ENCODE measurements at regions of chr13 and their contacts with region 1.

Region 1: DNA sequence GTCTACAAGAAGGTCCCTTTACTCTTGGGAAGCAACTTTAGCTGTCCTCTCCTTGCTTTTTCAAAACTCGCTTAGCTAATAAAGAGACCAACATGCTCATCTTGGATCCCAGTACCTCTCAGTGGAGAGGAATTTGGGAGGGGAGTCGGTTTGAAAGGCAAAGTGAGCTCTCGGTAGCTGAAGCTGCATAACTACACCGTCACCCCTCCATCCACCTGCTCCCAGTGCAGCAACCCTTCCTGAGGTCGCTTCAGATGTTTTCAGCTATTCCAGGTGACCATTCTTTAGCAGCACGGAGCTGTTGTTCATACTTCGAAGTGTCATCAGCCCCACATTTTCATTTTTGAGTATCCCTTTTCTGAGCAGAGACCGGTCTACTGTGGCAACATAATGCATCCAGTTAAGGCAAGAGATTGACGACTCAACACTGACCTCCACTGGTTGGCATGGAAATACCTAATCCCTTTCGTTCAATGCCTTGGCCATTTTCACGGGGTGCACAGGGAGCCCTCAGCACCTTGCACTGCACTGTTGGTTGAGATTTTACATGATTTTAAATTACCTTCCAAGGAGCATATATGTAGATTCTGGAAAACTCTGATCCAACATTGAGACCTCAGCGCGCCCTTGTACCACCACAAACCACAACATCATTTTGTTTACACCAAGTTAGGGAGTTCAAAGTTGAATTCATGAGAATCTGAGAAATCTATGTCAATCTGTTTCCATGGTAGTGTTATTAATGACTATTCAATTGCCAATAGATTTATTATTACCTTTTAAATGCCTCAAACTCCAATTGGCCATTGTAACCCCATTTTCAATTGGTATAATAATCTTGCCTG is 42.2 kb downstream of the DLEU7 start:
- DNase-seq: peak; percentile 69
- ATAC-seq: peak; percentile 99
- H3K4me3 ChIP-seq: no peak overlapping the region; the same call in 1 of the 2 replicates
- H3K27ac ChIP-seq: no peak overlapping the region
- H3K4me1 ChIP-seq: peaks cover 11% of the 10 kb centered on the region
- H3K27me3 ChIP-seq: no peaks in the 10 kb centered on the region
- CTCF ChIP-seq: peak; percentile 76 to 86 (median 85)
- EP300 ChIP-seq: no peak
- POLR2A ChIP-seq: no peak
- RAD21 ChIP-seq: peak; percentile 95

Region 2: GRCh38 chr13:49976314-49977258 is 824.7 kb before region 1 on chr13:
- CTCF ChIA-PET with region 1: interaction called, 51 read pairs
- POLR2A ChIA-PET with region 1: interaction called, 3 read pairs
- RAD21 ChIA-PET with region 1: interaction called, 30 read pairs
- SMC1A ChIA-PET with region 1: interaction called, 44 read pairs
- in situ Hi-C with region 1: loop called (anchors 5 kb)
- intact Hi-C with region 1: loop called (anchors 1 kb)
- DNase-seq: peak; percentile 55
- ATAC-seq: peak; percentile 95
- H3K4me3 ChIP-seq: no peak overlapping the region
- H3K27ac ChIP-seq: no peak overlapping the region
- H3K4me1 ChIP-seq: no peaks in the 10 kb centered on the region
- H3K27me3 ChIP-seq: no peaks in the 10 kb centered on the region
- CTCF ChIP-seq: peak; percentile 86 to 95 (median 88)
- EP300 ChIP-seq: no peak
- POLR2A ChIP-seq: no peak
- RAD21 ChIP-seq: peak; percentile 99

Region 3: DNA sequence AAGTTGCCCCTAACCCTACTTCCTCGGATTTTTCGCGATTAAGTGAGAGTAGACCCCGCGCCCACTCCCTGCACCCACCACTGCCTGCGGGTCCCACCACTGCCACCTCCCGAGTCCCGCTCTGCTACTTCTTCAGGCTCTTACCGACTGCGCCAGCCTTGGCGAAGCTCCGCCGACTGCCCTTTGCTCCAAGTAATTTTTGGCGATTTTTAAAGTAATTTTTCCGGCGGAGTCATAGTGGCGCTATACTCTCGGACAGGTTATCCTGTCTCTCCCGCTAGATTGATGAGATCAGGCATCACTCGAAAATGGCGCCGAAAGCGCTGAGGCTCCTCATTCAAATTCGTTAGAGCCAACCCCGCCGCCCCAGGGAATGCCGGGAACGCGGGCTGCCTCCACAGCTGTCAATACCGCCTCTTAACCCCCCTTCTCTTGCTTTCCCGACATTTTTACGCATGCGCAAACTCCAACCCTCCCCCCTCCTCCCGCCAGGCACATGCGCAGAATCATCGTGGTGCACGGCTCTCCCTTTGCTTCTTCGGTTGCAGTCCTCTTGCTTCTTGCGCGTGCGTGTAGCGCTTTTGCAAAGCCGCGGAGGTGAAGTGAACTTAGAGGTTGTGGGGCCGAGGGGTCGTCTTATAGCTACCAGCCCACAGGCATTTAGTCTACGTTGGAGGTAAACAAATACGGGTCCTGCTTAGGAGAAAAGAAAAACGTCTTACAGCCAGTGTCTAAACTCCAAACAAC is 719.5 kb before region 1 on chr13:
- CTCF ChIA-PET with region 1: interaction called, 36 read pairs
- POLR2A ChIA-PET with region 1: no interaction called
- RAD21 ChIA-PET with region 1: interaction called, 29 read pairs
- SMC1A ChIA-PET with region 1: interaction called, 18 read pairs
- in situ Hi-C with region 1: loop called (anchors 10 kb)
- intact Hi-C with region 1: loop called (anchors 2 kb)
- DNase-seq: peak; percentile 100
- ATAC-seq: peak; percentile 79
- H3K4me3 ChIP-seq: peak overlapping the region; percentile 92
- H3K27ac ChIP-seq: peak overlapping the region; percentile 82
- H3K4me1 ChIP-seq: peaks cover 4% of the 10 kb centered on the region; the same call in 1 of the 2 replicates
- H3K27me3 ChIP-seq: no peaks in the 10 kb centered on the region
- CTCF ChIP-seq: 0 out of 6 replicates have a peak, but pooled peaks of 2 of the 3 experiments have one; percentile 0 to 9
- EP300 ChIP-seq: 0 out of 4 replicates have a peak, but pooled peaks of 1 of the 2 experiments have one; percentile 9
- POLR2A ChIP-seq: peak; percentile 69
- RAD21 ChIP-seq: no peak

Region 4: GRCh38 chr13:50476577-50477285 is 324.6 kb before region 1 on chr13:
- CTCF ChIA-PET with region 1: interaction called, 18 read pairs
- POLR2A ChIA-PET with region 1: no interaction called
- RAD21 ChIA-PET with region 1: interaction called, 12 read pairs
- SMC1A ChIA-PET with region 1: interaction called, 9 read pairs
- in situ Hi-C with region 1: no loop called
- intact Hi-C with region 1: no loop called
- DNase-seq: no peak
- ATAC-seq: no peak
- H3K4me3 ChIP-seq: no peak overlapping the region
- H3K27ac ChIP-seq: no peak overlapping the region
- H3K4me1 ChIP-seq: no peaks in the 10 kb centered on the region
- H3K27me3 ChIP-seq: no peaks in the 10 kb centered on the region; a peak in 1 of 4 replicates
- CTCF ChIP-seq: no peak
- EP300 ChIP-seq: no peak
- POLR2A ChIP-seq: no peak
- RAD21 ChIP-seq: no peak

Region 5: GRCh38 chr13:50572129-50572528 is 229.2 kb before region 1 on chr13:
- CTCF ChIA-PET with region 1: no interaction called
- POLR2A ChIA-PET with region 1: no interaction called
- RAD21 ChIA-PET with region 1: no interaction called
- SMC1A ChIA-PET with region 1: no interaction called
- in situ Hi-C with region 1: no loop called
- intact Hi-C with region 1: no loop called
- DNase-seq: no peak
- ATAC-seq: no peak
- H3K4me3 ChIP-seq: no peak overlapping the region
- H3K27ac ChIP-seq: no peak overlapping the region
- H3K4me1 ChIP-seq: no peaks in the 10 kb centered on the region
- H3K27me3 ChIP-seq: peaks cover 0 to 3% of the 10 kb centered on the region in 2 experiments; a peak in 1 of 4 replicates
- CTCF ChIP-seq: no peak
- EP300 ChIP-seq: no peak
- POLR2A ChIP-seq: no peak
- RAD21 ChIP-seq: no peak

Region 6: GRCh38 chr13:50594276-50595051 is 206.8 kb before region 1 on chr13:
- CTCF ChIA-PET with region 1: interaction called, 19 read pairs
- POLR2A ChIA-PET with region 1: no interaction called
- RAD21 ChIA-PET with region 1: interaction called, 6 read pairs
- SMC1A ChIA-PET with region 1: interaction called, 12 read pairs
- in situ Hi-C with region 1: no loop called
- intact Hi-C with region 1: loop called (anchors 5 kb)
- DNase-seq: peak; percentile 79
- ATAC-seq: peak; percentile 91
- H3K4me3 ChIP-seq: peak overlapping the region; percentile 53; the same call in 1 of the 2 replicates
- H3K27ac ChIP-seq: peak overlapping the region; percentile 62
- H3K4me1 ChIP-seq: peaks cover 45% of the 10 kb centered on the region
- H3K27me3 ChIP-seq: no peaks in the 10 kb centered on the region
- CTCF ChIP-seq: 0 out of 6 replicates have a peak, but pooled peaks of 1 of the 3 experiments have one; percentile 17
- EP300 ChIP-seq: peak; percentile 71 to 80
- POLR2A ChIP-seq: no peak
- RAD21 ChIP-seq: peak; percentile 47

Region 7: GRCh38 chr13:50783717-50784290 is 17.5 kb before region 1 on chr13:
- CTCF ChIA-PET with region 1: interaction called, 5 read pairs
- POLR2A ChIA-PET with region 1: interaction called, 4 read pairs
- RAD21 ChIA-PET with region 1: interaction called, 4 read pairs
- SMC1A ChIA-PET with region 1: interaction called, 13 read pairs
- in situ Hi-C with region 1: no loop called
- intact Hi-C with region 1: no loop called
- DNase-seq: no peak
- ATAC-seq: no peak
- H3K4me3 ChIP-seq: no peak overlapping the region
- H3K27ac ChIP-seq: no peak overlapping the region
- H3K4me1 ChIP-seq: no peaks in the 10 kb centered on the region
- H3K27me3 ChIP-seq: peaks cover 0 to 2% of the 10 kb centered on the region in 2 experiments; a peak in 1 of 4 replicates
- CTCF ChIP-seq: no peak
- EP300 ChIP-seq: no peak
- POLR2A ChIP-seq: no peak
- RAD21 ChIP-seq: no peak

Region 8: DNA sequence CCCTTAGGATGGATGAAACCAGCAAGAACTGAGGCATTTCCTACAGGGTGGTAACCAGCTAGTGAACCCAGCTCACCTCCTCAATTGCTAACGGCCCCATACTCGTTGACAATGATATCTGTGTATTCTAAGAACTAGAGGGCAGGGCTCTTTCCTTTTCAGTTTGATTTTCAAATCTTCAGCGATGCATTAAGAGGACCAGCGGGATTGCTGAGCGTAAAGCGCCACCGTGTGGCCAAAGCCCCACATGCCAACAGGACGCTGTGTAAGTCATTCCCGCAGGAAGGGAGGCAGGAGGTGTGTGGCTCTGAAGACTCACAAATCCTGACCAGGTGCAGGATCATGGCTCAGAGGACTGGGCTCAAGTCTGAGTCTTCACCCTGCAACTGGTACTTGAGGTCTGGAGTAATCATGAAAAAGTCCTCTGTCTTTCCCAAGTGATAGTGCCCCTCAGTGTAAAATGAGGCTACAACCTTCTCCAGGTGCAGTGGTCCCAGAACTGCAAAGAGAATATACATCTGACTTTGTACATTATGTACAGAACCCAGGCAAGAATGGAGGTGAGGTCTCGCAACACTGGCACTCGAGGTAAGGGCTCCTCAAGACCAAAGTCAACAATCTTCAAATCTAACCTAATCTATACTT is 268.8 kb after region 1 on chr13:
- CTCF ChIA-PET with region 1: interaction called, 5 read pairs
- POLR2A ChIA-PET with region 1: no interaction called
- RAD21 ChIA-PET with region 1: interaction called, 5 read pairs
- SMC1A ChIA-PET with region 1: interaction called, 11 read pairs
- in situ Hi-C with region 1: no loop called
- intact Hi-C with region 1: loop called (anchors 5 kb)
- DNase-seq: peak; percentile 30
- ATAC-seq: peak; percentile 95
- H3K4me3 ChIP-seq: no peak overlapping the region
- H3K27ac ChIP-seq: no peak overlapping the region
- H3K4me1 ChIP-seq: no peaks in the 10 kb centered on the region
- H3K27me3 ChIP-seq: no peaks in the 10 kb centered on the region; a peak in 2 of 4 replicates
- CTCF ChIP-seq: peak; percentile 92 to 97 (median 96); a peak in 5 of 6 replicates
- EP300 ChIP-seq: no peak
- POLR2A ChIP-seq: no peak
- RAD21 ChIP-seq: peak; percentile 97

Measured in GM12878 (cell line).